K562 (cell line): ENCODE measurements at regions of chrX and their contacts with region 1.

Region 1: DNA sequence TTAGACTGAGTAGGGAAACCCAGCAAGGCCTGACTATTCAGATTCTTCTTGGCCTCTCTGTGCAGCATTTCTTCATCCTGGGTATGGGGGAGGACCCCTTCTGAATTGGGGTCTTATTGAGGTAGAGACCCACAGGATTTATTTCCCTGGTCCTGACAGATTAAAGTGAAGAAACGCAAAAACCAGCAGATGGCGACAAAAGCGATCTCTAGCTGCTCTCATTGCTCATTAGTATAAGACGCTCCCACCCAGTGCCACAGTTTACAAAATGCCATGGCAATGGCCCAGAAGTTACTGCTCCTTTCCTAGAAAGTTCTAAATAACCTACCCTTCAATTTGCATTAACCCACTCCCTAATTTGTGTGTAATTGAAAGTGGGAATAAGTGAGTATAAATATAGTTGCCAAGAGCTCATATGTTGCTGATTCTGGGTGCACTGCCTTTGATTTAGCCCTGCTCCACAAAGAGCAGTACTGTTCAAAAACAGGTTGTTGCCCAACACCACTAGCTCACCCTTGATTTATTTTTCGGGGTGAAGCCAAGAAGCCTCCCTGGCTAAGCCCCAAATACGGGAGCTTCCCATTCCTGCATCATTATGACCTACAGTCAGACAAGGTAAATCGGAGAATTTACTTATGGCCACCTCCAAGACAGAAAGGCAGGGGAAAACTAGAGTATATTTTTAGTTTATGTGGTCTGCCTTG is 3.7 kb upstream of the BEX4 start:
- DNase-seq: peak in 2 of 4 experiments; percentile 39 to 81
- ATAC-seq: peak; percentile 52
- H3K4me3 ChIP-seq: no peak overlapping the region
- H3K27ac ChIP-seq: peak overlapping the region; percentile 12; the same call in 2 of the 3 replicates
- H3K4me1 ChIP-seq: peaks cover 11 to 21% of the 10 kb centered on the region in 2 experiments; a peak in 4 of 5 replicates
- H3K27me3 ChIP-seq: no peaks in the 10 kb centered on the region
- CTCF ChIP-seq: peak; percentile 60 to 73 (median 69)
- EP300 ChIP-seq: no peak
- POLR2A ChIP-seq: no peak
- RAD21 ChIP-seq: peak; percentile 71 to 86

Region 2: GRCh38 chrX:103233263-103233662 is 22.1 kb after region 1 on chrX:
- CTCF ChIA-PET with region 1: no interaction called
- POLR2A ChIA-PET with region 1: interaction called, 4 read pairs
- in situ Hi-C with region 1: no loop called
- intact Hi-C with region 1: loop called (anchors 1 kb)
- DNase-seq: peak; percentile 21 to 88 (median 50)
- ATAC-seq: peak; percentile 85
- H3K4me3 ChIP-seq: no peak overlapping the region
- H3K27ac ChIP-seq: peak overlapping the region; percentile 80
- H3K4me1 ChIP-seq: peaks cover 9 to 46% of the 10 kb centered on the region in 2 experiments
- H3K27me3 ChIP-seq: no peaks in the 10 kb centered on the region
- CTCF ChIP-seq: no peak
- EP300 ChIP-seq: peak; percentile 92
- POLR2A ChIP-seq: no peak
- RAD21 ChIP-seq: no peak

Region 3: GRCh38 chrX:103248553-103248952 is 37.4 kb after region 1 on chrX:
- CTCF ChIA-PET with region 1: interaction called, 10 read pairs
- POLR2A ChIA-PET with region 1: no interaction called
- in situ Hi-C with region 1: loop called (anchors 5 kb)
- intact Hi-C with region 1: loop called (anchors 1 kb)
- DNase-seq: peak; percentile 33 to 63 (median 34)
- ATAC-seq: peak; percentile 66
- H3K4me3 ChIP-seq: no peak overlapping the region
- H3K27ac ChIP-seq: no peak overlapping the region
- H3K4me1 ChIP-seq: peaks cover 0 to 31% of the 10 kb centered on the region in 2 experiments; a peak in 3 of 5 replicates
- H3K27me3 ChIP-seq: no peaks in the 10 kb centered on the region
- CTCF ChIP-seq: peak; percentile 41 to 67 (median 49); a peak in 4 of 6 replicates
- EP300 ChIP-seq: no peak
- POLR2A ChIP-seq: no peak
- RAD21 ChIP-seq: peak; percentile 71 to 80